Activated CD4-positive, alpha-beta T cell treated with anti-CD3 and anti-CD28 coated beads, Interleukin-2, amount 10 ng/mL, durations not matched to agents 24 days and 14 days (primary cell): ENCODE measurements at regions of chr1 and their contacts with region 1.

Region 1: DNA sequence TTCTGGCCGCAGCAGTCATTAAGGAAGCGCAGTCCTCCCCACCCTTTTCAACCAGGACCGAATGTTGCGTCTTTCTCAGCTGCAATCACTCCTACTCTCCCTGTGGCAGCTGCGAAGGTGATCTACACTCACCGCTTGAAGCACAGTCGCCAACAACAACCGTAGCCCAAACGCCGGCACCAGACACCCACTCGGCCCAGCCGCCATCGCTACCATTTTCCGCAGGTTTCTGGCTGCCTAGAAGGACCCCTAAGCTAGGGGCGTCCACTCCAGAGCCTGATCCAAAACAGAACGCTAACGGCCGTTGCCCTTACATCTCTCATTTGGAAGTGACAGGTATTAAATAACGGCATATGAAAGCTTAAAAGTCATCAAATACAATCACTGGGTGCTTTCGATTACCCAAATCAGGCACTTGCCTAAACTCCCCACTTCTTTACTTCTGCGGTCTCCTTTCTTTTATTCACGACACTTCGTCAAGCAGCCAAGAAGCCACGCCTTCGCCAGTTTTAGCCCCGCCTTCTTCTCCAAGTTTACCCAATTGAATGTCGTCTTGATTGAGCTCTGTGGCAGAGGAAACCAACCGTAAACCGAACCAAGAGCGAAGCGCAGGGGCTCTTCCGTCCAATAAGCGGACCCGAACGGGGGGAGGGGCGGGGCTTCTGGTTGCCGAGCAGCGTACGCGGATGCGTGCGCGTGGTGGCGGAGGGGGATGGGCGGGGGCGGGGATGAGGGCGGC is at the start of gene SELENOF:
- DNase-seq: peak; percentile 100
- H3K4me3 Mint-ChIP-seq: no peak within 1 kb of the TSS
- H3K27ac Mint-ChIP-seq: no peak within 1 kb of the TSS
- H3K4me1 Mint-ChIP-seq: peaks cover 33% of the 10 kb centered on the region
- H3K27me3 Mint-ChIP-seq: no peaks in the 10 kb centered on the region
- total RNA-seq, gene SELENOF: 179 and 184 TPM in 2 replicates

Region 2: GRCh38 chr1:86395771-86396497 is 518.1 kb before region 1 on chr1 and contains the start of gene ODF2L:
- intact Hi-C with region 1: loop called (anchors 2 kb)
- DNase-seq: peak; percentile 97
- H3K4me3 Mint-ChIP-seq: peak within 1 kb of the TSS; percentile 94
- H3K27ac Mint-ChIP-seq: peak within 1 kb of the TSS; percentile 98
- H3K4me1 Mint-ChIP-seq: peaks cover 37% of the 10 kb centered on the region
- H3K27me3 Mint-ChIP-seq: peaks cover 13% of the 10 kb centered on the region
- total RNA-seq, gene ODF2L: 16.0 and 23.3 TPM in 2 replicates

Region 3: DNA sequence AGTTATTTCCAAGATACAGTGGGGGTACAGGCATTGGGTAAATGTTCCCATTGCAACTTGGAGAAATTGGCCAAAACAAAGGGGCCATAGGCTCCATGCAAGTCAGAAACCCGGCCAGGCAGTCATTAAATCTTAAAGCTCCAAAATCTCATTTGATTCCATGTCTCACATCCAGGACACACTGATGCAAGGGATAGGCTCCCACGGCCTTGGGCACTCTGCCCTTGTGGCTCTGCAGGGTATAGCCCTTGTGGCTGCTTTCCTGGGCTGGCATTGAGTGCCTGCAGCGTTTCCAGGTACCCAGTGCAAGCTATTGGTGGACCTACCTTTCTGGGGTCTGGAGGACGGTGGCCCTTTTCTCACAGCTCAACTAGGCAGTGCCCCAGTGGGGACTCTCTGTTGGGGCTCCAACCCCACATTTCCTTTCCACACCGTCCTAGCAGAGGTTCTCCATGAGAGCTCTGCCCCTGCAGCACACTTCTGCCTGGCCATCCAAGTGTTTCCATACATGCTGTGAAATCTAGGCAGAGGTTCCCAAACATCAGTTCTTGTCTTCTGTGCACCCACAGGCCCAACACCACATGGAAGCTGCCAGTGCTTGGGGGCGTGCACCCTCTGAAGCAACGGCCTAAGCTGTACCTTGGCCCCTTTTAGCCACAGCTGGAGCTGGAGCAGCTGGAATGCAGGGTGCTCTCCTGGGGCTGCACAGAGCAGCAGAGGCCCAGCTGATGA is 67.6 kb after region 1 on chr1:
- intact Hi-C with region 1: no loop called
- DNase-seq: no peak
- H3K4me3 Mint-ChIP-seq: no peak overlapping the region
- H3K27ac Mint-ChIP-seq: no peak overlapping the region
- H3K4me1 Mint-ChIP-seq: no peaks in the 10 kb centered on the region
- H3K27me3 Mint-ChIP-seq: no peaks in the 10 kb centered on the region

Region 4: GRCh38 chr1:87045761-87046304 is 131.8 kb after region 1 on chr1:
- intact Hi-C with region 1: loop called (anchors 1 kb)
- DNase-seq: peak; percentile 88
- H3K4me3 Mint-ChIP-seq: peak overlapping the region; percentile 71
- H3K27ac Mint-ChIP-seq: peak overlapping the region; percentile 86
- H3K4me1 Mint-ChIP-seq: peaks cover 25% of the 10 kb centered on the region
- H3K27me3 Mint-ChIP-seq: no peaks in the 10 kb centered on the region

Region 5: DNA sequence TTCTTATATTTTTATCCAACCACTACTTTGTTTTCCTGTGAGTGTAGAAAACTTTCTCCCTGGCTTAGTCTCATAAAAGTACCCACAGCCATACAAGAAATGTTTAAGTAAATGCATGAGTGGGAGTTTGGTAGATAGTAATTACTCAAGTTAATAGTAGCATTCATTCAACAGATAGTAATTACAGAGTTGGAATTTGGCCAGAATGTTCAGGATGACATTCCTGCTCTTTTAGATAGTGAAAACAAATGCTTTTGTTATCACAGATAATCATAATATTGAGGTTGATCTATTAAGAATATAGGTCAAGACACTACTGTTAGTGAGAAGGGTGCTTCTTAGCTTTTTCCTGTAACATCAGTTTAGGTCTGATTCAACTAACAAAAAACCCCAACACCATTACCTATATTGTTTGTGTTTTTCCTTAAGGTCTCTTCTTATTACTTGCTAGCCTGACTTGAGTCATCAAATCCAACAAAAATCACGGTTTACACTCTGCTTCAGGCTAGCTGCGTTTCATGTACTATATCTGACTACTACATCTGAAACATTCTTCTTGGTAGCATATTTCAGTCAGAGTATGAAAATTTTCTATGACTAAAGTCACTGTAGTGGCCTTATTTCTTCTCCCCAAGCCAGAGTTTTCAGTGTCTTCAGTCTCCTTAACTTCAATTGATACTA is 164.0 kb after region 1 on chr1:
- intact Hi-C with region 1: loop called (anchors 2 kb)
- DNase-seq: no peak
- H3K4me3 Mint-ChIP-seq: no peak overlapping the region
- H3K27ac Mint-ChIP-seq: peak overlapping the region; percentile 73
- H3K4me1 Mint-ChIP-seq: peaks cover 9% of the 10 kb centered on the region
- H3K27me3 Mint-ChIP-seq: no peaks in the 10 kb centered on the region

Region 6: DNA sequence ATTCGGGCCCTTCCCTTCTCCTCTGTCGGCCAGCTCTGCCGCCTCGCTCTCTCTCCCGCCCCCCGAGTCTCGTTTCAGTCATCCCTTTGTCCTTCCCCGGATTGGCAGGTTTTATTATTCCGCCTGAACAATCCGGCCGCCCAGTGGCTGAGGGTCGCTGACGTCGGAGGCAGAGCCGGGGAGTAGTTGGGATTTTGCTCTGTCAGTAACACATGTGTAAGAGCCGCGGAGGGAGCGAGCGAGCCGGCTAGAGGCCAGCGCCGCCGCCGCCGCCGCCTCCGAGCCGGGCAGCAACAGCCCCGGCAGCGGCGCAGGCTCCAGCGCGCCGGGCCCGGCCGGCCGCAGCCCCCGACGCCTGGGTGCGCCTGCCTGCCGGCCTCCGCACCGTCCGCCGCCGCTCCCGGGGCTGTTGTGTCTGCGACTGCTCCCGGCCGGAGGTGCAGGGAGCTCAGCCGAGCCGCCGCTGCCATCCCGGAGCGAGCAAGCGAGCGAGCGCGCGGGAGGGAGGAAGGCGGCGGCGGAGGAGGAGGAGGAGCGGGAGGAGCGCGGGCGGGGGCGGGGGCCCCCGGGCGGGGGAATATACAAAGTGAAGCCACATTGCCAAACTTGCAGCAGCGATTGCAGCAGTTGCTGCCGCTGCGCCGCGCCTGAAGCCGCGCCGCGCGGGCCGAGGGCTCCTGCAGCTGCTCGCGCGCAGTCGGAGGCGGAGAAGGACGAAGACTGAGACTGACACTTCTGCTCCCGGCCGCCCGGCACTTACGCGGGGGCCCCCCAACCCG is 414.4 kb after region 1 on chr1 and contains the start of gene LMO4:
- intact Hi-C with region 1: loop called (anchors 1 kb)
- DNase-seq: peak; percentile 94
- H3K4me3 Mint-ChIP-seq: peak within 1 kb of the TSS; percentile 89
- H3K27ac Mint-ChIP-seq: peak within 1 kb of the TSS; percentile 94
- H3K4me1 Mint-ChIP-seq: peaks cover 35% of the 10 kb centered on the region
- H3K27me3 Mint-ChIP-seq: peaks cover 9% of the 10 kb centered on the region
- total RNA-seq, gene LMO4: 23.7 and 26.1 TPM in 2 replicates